Pancreas (tissue), 10 donors: ENCODE measurements at regions of chr14 and their contacts with region 1.

Region 1: GRCh38 chr14:75132382-75133086 is 5.7 kb upstream of the NEK9 start:
- DNase-seq: peak in 3 of 6 donors; percentile 29 to 68 (median 37)
- ATAC-seq: peak; percentile 63 to 89 (median 86)
- H3K4me3 ChIP-seq: no peak overlapping the region
- H3K27ac ChIP-seq: no peak overlapping the region
- H3K4me1 ChIP-seq: peaks cover 6 to 14% (median 7%) of the 10 kb centered on the region in 3 donors
- H3K27me3 ChIP-seq: no peaks in the 10 kb centered on the region
- CTCF ChIP-seq: peak; percentile 39 to 61 (median 49)

Region 2: DNA sequence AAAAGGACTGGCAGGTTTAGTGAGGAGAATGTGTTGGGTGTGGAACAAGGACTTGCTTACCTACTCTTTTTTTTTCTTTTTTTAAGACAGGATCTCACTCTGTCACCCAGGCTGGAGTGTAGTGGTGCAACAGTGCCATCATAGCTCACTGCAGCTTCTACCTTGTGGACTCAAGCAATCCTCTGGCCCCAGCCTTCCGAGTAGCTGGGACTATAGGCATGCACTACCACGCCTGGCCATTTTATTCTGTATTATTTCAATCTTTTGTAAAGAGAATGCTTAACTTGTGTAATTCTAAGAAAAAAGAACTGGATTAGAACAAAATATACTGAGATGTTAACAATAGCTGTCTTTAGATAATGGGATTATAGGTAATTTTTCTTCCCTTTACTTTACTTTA is 786.2 kb before region 1 on chr14:
- intact Hi-C with region 1: no loop called
- DNase-seq: no peak
- ATAC-seq: no peak
- H3K4me3 ChIP-seq: no peak overlapping the region
- H3K27ac ChIP-seq: no peak overlapping the region
- H3K4me1 ChIP-seq: peaks cover 4 to 22% (median 11%) of the 10 kb centered on the region in 3 donors
- H3K27me3 ChIP-seq: no peaks in the 10 kb centered on the region
- CTCF ChIP-seq: no peak

Region 3: DNA sequence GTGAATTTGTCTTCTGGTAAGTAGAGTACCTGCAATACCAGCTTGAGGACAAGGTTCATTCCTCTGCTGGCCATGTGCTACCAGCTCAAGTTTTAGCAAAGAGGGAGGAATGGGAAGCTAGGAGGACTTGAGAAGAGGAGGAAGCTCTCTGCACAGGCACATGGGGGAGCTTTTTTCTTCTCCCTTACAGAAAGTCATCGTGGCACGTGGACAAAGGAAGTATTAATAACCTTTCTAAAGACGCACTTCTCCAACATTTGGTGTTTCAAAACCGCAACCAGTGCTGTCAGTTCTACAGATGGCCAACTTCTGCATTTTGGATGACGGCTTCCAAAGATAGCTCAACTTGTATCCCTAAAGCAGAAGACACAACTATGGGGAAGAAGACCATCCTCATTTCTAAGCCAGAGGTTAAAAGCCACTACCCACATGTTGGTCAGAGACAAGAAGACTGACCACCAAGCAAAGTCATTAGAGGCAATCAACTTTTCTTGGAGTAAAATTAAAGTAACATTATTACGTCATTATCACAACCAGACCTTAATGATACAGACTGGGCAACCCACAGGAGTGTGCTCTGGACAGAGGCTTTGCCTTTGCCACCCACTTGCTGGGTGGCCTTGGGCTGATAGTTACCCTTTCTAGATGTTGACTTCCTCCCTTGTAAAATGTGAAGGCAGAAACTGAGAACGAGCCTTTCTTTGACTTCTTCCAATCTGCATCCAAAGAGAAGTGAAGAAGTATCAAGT is 56.2 kb after region 1 on chr14:
- intact Hi-C with region 1: no loop called
- DNase-seq: peak in 1 of 6 donors; percentile 34
- ATAC-seq: peak in 2 of 4 donors; percentile 75 to 76
- H3K4me3 ChIP-seq: no peak overlapping the region
- H3K27ac ChIP-seq: peak overlapping the region in 1 of 4 donors; percentile 41
- H3K4me1 ChIP-seq: peaks cover 0 to under 1% (median 0%) of the 10 kb centered on the region in 3 donors
- H3K27me3 ChIP-seq: no peaks in the 10 kb centered on the region
- CTCF ChIP-seq: no peak

Region 4: GRCh38 chr14:75295491-75296345 is 163.2 kb after region 1 on chr14:
- intact Hi-C with region 1: loop called (anchors 5 kb)
- DNase-seq: peak; percentile 65 to 91 (median 83)
- ATAC-seq: peak; percentile 42 to 67 (median 64)
- H3K4me3 ChIP-seq: peak overlapping the region in 3 of 4 donors; percentile 16 to 74 (median 56)
- H3K27ac ChIP-seq: peak overlapping the region; percentile 94 to 98 (median 96)
- H3K4me1 ChIP-seq: peaks cover 4 to 19% (median 10%) of the 10 kb centered on the region in 3 donors
- H3K27me3 ChIP-seq: no peaks in the 10 kb centered on the region
- CTCF ChIP-seq: peak; percentile 88 to 95 (median 94)

Region 5: GRCh38 chr14:75497191-75497590 is 364.7 kb after region 1 on chr14:
- intact Hi-C with region 1: loop called in 1 of 3 experiments (anchors 10 kb)
- DNase-seq: no peak
- ATAC-seq: peak in 2 of 4 donors; percentile 38 to 53
- H3K4me3 ChIP-seq: no peak overlapping the region
- H3K27ac ChIP-seq: no peak overlapping the region
- H3K4me1 ChIP-seq: no peaks in the 10 kb centered on the region
- H3K27me3 ChIP-seq: no peaks in the 10 kb centered on the region
- CTCF ChIP-seq: no peak